H1 (cell line): ENCODE measurements at regions of chr1 and their contacts with region 1.

Region 1: DNA sequence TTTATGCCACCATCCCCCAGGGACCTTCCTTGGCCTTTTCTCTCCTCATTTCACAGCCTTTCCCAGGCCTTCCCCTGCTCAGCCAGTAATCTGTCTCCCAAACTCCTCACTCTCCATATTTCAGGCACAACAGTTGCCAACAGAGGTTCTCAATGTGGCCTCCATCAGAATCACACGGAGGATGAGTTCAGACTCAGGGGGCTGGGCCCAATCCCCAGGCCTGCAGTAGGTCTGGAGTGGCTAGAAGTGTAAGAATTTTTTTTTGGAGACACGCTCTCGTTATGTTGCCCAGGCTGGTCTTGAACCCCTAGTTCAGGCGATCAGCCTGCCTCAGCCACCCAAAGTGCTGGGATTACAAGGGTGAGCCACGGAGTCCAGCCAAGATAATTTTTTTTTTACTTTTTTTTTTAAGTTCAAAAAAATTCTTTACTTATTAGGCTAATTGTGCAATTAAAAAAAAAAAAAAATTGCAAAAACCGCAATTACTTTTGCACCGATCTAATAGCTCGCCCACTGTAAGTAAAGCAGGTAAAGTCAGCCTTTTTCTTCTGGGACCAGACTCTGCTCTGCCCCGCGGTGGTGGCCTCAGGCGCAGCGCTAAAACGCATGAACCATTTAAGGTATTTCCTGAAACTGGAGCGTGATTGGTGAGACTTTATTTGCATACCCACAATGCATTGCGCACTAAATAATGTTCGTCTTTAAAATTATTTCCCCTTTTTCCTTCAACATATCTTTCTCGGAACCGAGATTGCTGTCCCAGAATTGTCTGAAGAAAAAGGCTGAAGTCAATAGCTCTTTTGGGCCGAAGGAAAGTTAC is 18.7 kb downstream of the KIAA2013 start:
- DNase-seq: peak; percentile 96
- H3K4me3 ChIP-seq: peak overlapping the region in 2 of 4 experiments; percentile 25 to 61; a peak in 2 of 8 replicates
- H3K27ac ChIP-seq: peak overlapping the region; percentile 100
- H3K4me1 ChIP-seq: peaks cover 0 to 4% (median 1%) of the 10 kb centered on the region in 4 experiments; a peak in 3 of 7 replicates
- H3K27me3 ChIP-seq: no peaks in the 10 kb centered on the region
- CTCF ChIP-seq: peak; percentile 74 to 89 (median 75)
- EP300 ChIP-seq: no peak
- POLR2A ChIP-seq: no peak
- RAD21 ChIP-seq: peak; percentile 63 to 64

Region 2: DNA sequence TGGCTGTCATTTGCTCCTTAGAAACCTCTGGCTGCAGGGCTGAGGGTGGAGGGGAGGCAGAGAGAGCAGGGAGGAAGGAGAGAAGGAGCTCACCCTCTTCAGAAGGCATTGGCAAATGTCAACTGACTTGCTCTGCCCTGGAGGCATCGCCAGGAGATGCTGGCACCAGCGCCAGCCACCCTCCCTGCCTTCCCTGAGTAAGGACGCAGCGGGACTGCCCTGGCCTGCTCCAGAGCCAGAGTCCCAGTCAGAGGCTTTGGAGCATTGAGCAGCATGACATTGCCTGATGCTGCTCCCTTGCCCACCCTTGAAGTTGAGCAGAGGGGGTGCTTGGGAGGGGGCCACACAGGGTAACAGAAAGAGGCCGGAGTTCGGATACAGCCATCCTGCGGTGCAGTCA is 366.2 kb before region 1 on chr1:
- CTCF ChIA-PET with region 1: no interaction called
- POLR2A ChIA-PET with region 1: no interaction called
- DNase-seq: no peak
- H3K4me3 ChIP-seq: no peak overlapping the region
- H3K27ac ChIP-seq: no peak overlapping the region
- H3K4me1 ChIP-seq: peaks cover 0 to 3% (median 0%) of the 10 kb centered on the region in 4 experiments; a peak in 4 of 7 replicates
- H3K27me3 ChIP-seq: no peaks in the 10 kb centered on the region; a peak in 1 of 7 replicates
- CTCF ChIP-seq: no peak
- EP300 ChIP-seq: no peak
- POLR2A ChIP-seq: no peak
- RAD21 ChIP-seq: no peak

Region 3: DNA sequence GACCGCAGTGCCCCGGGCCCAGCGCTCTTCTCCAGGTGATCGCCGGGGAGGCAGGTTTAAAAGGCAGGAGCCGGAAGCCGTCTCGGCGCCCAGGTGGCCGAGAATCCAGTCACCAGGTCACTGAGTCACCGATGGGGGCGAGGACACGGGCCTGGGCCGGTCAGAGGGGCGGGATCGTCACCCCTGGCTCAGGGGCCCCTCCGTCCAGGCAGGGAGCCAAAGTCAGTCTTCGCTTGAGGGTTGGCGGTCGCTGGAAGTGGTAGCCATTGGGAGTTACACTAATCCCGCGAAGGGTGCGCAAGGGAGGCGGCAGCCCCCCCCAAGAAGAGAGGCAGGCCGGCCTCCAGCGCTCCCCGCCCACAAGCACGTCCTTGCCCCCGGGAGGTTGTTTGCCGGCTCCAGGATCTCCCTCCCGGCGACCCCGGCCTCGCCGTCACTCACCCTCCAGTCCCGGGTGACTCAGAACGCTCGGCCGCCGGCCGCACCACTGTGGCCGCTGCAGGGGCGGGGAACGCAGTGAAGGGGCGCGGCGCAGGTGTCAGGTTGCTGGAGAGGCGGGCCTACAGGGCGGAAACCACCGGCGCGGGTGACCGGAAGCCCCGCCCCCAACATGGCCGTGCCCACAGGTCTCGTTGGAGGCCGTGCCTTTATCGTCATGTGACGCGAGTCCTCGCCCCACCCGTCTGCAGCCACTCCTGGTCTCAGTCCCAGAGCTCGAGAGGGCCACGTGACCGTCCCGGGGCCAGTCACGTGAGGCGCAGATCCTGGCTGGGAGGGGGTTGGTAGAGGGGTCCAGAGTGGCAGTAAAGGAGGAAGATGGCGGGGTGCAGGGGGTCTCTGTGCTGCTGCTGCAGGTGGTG is 101.8 kb before region 1 on chr1 and contains the starts of genes CLCN6 and MTHFR:
- CTCF ChIA-PET with region 1: no interaction called
- POLR2A ChIA-PET with region 1: interaction called, 25 read pairs
- DNase-seq: peak; percentile 98
- H3K4me3 ChIP-seq: peak within 1 kb of the TSS; percentile 76 to 88 (median 84)
- H3K27ac ChIP-seq: peak within 1 kb of the TSS; percentile 81
- H3K4me1 ChIP-seq: peaks cover 13 to 24% (median 18%) of the 10 kb centered on the region in 4 experiments
- H3K27me3 ChIP-seq: no peaks in the 10 kb centered on the region
- CTCF ChIP-seq: no peak
- EP300 ChIP-seq: peak in 1 of 2 experiments; percentile 86; a peak in 2 of 3 replicates
- POLR2A ChIP-seq: peak; percentile 20 to 67
- RAD21 ChIP-seq: no peak
- total RNA-seq, gene CLCN6: 25.5 and 26.0 TPM in 2 replicates
- total RNA-seq, gene MTHFR: 17.9 and 18.5 TPM in 2 replicates

Region 4: GRCh38 chr1:11874258-11874562 is 33.3 kb before region 1 on chr1:
- CTCF ChIA-PET with region 1: no interaction called
- POLR2A ChIA-PET with region 1: interaction called, 109 read pairs
- DNase-seq: no peak
- H3K4me3 ChIP-seq: no peak overlapping the region
- H3K27ac ChIP-seq: no peak overlapping the region
- H3K4me1 ChIP-seq: no peaks in the 10 kb centered on the region
- H3K27me3 ChIP-seq: no peaks in the 10 kb centered on the region
- CTCF ChIP-seq: no peak
- EP300 ChIP-seq: no peak
- POLR2A ChIP-seq: no peak
- RAD21 ChIP-seq: no peak

Region 5: GRCh38 chr1:11934302-11935056 is 27.0 kb after region 1 on chr1 and contains the start of gene PLOD1:
- CTCF ChIA-PET with region 1: interaction called, 3 read pairs
- POLR2A ChIA-PET with region 1: interaction called, 263 read pairs
- DNase-seq: peak; percentile 36 to 85
- H3K4me3 ChIP-seq: peak within 1 kb of the TSS; percentile 48 to 66 (median 64)
- H3K27ac ChIP-seq: peak within 1 kb of the TSS; percentile 84
- H3K4me1 ChIP-seq: peaks cover 0 to 16% (median 10%) of the 10 kb centered on the region in 4 experiments; a peak in 6 of 7 replicates
- H3K27me3 ChIP-seq: no peaks in the 10 kb centered on the region
- CTCF ChIP-seq: no peak
- EP300 ChIP-seq: no peak
- POLR2A ChIP-seq: peak in 1 of 2 experiments; percentile 92; a peak in 2 of 3 replicates
- RAD21 ChIP-seq: no peak
- total RNA-seq, gene PLOD1: 44.9 and 53.4 TPM in 2 replicates

Region 6: DNA sequence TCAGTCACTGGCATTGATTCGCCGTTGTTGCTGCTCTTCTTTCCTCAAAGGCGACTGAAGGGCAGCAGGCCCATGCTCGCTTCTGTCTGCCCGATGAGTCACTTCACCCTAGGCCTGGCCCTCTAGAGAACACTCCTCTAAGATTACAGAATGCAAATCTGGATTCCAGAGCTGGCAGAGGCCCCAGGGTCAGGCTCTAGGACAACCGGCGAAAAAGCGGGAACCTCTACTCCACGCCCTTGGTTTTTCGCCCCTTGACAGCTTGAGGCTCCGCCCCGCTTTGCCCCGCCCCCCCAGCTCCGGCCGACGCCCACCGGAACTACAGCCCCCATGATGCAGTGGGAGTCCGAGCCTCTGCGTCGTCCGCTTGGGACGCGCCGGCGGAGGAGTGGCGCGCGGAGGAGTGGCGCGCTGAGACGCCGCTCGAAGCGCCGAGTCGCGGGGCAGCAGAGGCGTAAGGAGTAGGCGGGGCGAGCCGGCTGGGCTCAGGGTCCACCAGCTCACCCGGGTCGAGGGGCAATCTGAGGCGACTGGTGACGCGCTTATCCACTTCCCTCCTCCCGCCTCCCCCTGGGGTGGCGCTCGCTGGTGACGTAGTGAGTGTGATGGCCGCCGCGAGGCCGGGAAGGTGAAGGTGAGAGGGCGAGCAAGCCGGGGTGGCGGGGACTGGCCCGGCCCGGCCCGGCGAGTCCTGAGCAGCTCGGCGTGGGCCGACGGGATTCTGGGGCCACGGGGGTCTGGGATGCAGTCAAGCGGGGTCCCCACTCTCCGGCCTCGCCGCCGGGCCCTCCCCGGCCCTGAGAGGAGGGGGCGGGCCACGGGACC is 72.6 kb after region 1 on chr1 and contains the start of gene MFN2:
- CTCF ChIA-PET with region 1: interaction called, 5 read pairs
- POLR2A ChIA-PET with region 1: interaction called, 220 read pairs
- DNase-seq: peak; percentile 97
- H3K4me3 ChIP-seq: peak within 1 kb of the TSS; percentile 78 to 94 (median 84)
- H3K27ac ChIP-seq: peak within 1 kb of the TSS; percentile 96
- H3K4me1 ChIP-seq: peaks cover 0 to 5% (median 2%) of the 10 kb centered on the region in 4 experiments; a peak in 3 of 7 replicates
- H3K27me3 ChIP-seq: no peaks in the 10 kb centered on the region
- CTCF ChIP-seq: no peak
- EP300 ChIP-seq: 0 out of 3 replicates have a peak, but pooled peaks of 1 of the 2 experiments have one; percentile 6
- POLR2A ChIP-seq: peak; percentile 91 to 95
- RAD21 ChIP-seq: no peak
- total RNA-seq, gene MFN2: 58.2 and 62.5 TPM in 2 replicates

Region 7: DNA sequence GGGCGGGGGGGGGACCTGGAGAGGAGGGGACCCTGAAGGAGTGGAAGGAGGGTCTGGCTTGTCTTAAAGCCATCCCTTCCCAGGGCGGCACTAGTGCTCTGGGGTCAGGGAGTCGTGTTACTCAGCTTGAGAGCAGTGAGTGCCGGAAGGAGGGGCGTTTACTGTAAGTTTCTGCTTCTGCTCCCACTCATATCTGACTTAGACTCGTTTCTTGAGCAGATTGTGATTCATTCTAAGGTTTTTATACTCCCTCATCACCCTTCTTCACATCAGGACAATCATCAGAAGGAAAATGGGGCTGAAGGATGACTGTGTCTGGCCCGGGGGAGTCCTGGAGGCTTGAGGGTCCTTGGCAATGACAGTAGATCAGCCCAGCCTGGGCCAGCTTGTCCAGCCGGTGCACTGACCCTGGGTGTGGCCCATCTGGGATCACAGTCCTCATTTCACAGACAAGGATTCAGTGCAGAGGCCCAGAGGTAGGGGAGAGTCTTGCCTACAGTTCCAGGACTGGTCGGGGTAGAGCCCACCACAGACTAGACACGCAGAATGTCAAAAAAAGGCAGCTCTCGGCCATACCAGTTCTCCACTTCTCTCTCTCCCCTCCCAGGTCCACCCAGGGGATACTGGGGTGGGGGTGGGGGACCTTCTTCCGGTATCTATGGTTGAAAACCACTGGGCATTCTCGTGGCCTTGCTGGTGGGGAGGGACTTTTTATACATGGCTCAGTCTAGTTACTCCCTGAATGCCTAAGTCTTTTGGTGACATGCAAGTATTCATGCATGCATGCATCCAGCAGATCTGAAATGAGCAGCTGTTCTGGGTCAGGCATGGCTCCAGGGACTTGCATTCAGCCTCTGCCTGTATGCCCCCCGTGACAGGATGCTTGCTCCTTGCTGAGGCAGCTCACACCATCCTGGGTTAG is 160.7 kb after region 1 on chr1:
- CTCF ChIA-PET with region 1: no interaction called
- POLR2A ChIA-PET with region 1: interaction called, 31 read pairs
- DNase-seq: peak; percentile 62 to 64
- H3K4me3 ChIP-seq: 0 out of 8 replicates have a peak overlapping the region, but pooled peaks of 2 of the 4 experiments have one; percentile 14 to 31
- H3K27ac ChIP-seq: no peak overlapping the region
- H3K4me1 ChIP-seq: peaks cover 21 to 39% (median 26%) of the 10 kb centered on the region in 4 experiments
- H3K27me3 ChIP-seq: peaks cover 0 to 16% (median 6%) of the 10 kb centered on the region in 4 experiments; a peak in 4 of 7 replicates
- CTCF ChIP-seq: no peak
- EP300 ChIP-seq: no peak
- POLR2A ChIP-seq: no peak
- RAD21 ChIP-seq: no peak